GM12878 (cell line): ENCODE measurements at regions of chr1 and their contacts with region 1.

Region 1: GRCh38 chr1:64834734-64835133 is 89.9 kb downstream of the RAVER2 start:
- DNase-seq: no peak
- ATAC-seq: no peak
- H3K4me3 ChIP-seq: no peak overlapping the region
- H3K27ac ChIP-seq: no peak overlapping the region
- H3K4me1 ChIP-seq: no peaks in the 10 kb centered on the region
- H3K27me3 ChIP-seq: no peaks in the 10 kb centered on the region
- CTCF ChIP-seq: no peak
- EP300 ChIP-seq: no peak
- POLR2A ChIP-seq: no peak
- RAD21 ChIP-seq: no peak

Region 2: DNA sequence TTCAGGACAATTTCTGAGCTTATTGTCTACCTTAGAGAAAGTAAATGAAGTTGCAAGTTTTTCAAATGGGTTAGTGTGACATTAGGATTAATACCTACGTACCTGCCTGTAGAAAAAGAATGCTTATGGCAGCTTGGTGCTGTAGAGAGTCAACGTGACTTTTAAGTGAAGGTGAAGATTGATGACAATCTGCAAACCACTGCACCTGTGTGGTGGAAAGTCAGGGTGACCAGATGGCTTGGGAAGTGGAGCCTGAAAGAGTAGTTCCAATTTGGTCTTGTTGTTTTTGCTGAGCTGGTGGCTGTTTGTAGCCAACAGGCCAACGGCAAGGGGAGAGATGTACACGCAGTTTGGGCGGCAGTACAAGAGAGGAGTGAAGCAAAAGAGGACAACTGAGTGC is 209.6 kb after region 1 on chr1:
- CTCF ChIA-PET with region 1: no interaction called
- POLR2A ChIA-PET with region 1: no interaction called
- RAD21 ChIA-PET with region 1: no interaction called
- SMC1A ChIA-PET with region 1: no interaction called
- in situ Hi-C with region 1: no loop called
- intact Hi-C with region 1: loop called (anchors 5 kb)
- DNase-seq: no peak
- ATAC-seq: no peak
- H3K4me3 ChIP-seq: no peak overlapping the region
- H3K27ac ChIP-seq: no peak overlapping the region
- H3K4me1 ChIP-seq: no peaks in the 10 kb centered on the region; the same call in 1 of the 2 replicates
- H3K27me3 ChIP-seq: peaks cover 0 to 5% of the 10 kb centered on the region in 2 experiments; a peak in 2 of 4 replicates
- CTCF ChIP-seq: no peak
- EP300 ChIP-seq: no peak
- POLR2A ChIP-seq: no peak
- RAD21 ChIP-seq: no peak